Prostate gland (tissue), 2 donors: ENCODE measurements at regions of chr10 and their contacts with region 1.

Region 1: DNA sequence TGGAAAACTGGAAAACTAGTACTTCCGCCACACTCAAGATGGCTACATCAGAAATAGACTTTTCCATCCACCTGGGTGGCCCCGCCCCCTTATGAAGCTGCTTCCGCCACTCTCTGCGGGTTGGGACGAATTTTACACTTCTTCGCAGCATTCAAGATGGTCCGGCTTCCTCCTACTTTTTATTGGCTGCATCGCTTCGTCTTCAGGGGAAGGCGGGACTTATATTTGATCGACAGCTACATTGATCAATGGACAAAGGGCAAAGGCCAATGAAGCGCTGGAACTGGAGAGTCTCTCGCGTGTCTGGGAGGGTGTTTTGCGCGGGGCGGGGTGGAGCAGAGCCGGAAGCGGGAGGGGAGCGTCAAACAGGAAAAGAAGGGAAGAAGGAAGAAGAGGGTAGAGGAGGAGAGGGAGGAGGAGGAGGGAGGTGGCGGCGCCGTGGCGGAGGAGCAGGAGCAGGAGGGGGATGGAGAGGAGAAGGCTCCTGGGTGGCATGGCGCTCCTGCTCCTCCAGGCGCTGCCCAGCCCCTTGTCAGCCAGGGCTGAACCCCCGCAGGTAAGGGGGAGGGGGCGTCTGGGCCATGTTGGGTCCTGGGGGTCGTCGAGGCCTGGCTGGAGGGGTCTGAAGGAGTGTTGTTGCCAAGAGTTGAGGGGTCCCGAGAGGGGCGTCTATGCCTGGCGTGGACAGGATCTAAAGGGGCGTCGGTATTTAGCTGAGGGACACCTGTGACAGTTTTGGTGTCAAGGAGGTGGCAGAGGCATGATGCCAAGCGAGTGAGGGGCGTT is at the start of gene WBP1L:
- DNase-seq: peak; percentile 99
- H3K4me3 ChIP-seq: peak within 1 kb of the TSS; percentile 74 to 95
- H3K27ac ChIP-seq: peak within 1 kb of the TSS; percentile 79 to 90
- H3K4me1 ChIP-seq: no peaks in the 10 kb centered on the region
- H3K27me3 ChIP-seq: no peaks in the 10 kb centered on the region
- CTCF ChIP-seq: no peak
- POLR2A ChIP-seq: peak; percentile 92
- total RNA-seq, gene WBP1L: 136 to 168 TPM

Region 2: GRCh38 chr10:102802920-102803534 is 59.2 kb after region 1 on chr10:
- intact Hi-C with region 1: loop called (anchors 5 kb)
- DNase-seq: no peak
- H3K4me3 ChIP-seq: no peak overlapping the region
- H3K27ac ChIP-seq: peak overlapping the region; percentile 53 to 86
- H3K4me1 ChIP-seq: peaks cover 22% of the 10 kb centered on the region
- H3K27me3 ChIP-seq: no peaks in the 10 kb centered on the region
- CTCF ChIP-seq: no peak
- POLR2A ChIP-seq: no peak